ENCODE measurements at regions of chr11 and their contacts with region 1.

Region 1: DNA sequence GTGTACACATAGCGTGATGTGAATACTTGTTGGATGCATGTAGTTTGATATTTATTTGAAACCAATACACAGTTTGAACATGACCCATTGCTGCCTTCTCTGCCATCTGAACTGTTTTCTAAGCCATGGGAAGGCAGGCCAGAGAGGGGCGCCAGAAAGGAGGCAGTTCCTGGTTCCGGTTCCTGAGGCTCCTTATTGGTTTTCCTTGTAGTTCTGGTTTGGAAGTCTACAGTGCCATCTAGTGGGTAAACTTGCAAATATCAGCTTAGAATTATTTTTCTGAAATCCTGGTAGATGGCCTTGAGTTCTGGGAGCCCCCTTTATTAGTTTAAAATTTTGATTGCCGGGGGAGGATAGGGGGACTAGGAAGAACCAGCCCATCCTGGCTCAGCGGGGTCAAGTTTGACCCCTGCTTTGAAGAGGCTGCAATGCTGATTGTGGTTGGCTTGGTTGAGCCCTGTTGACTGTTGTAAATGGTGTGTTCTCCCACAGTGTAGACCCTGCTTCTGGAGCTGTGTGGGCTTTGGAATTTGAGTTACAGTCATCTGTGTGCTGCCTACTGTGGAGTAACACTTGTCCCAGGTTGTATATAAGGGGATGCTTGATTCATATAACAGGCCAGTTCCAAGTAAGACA is 48.4 kb downstream of the GRAMD1B start:
- DNase-seq: no peak
- CTCF ChIP-seq: peak; percentile 43

Region 2: GRCh38 chr11:123231256-123231655 is 247.2 kb before region 1 on chr11:
- in situ Hi-C with region 1: no loop called
- DNase-seq: no peak
- CTCF ChIP-seq: no peak

Region 3: DNA sequence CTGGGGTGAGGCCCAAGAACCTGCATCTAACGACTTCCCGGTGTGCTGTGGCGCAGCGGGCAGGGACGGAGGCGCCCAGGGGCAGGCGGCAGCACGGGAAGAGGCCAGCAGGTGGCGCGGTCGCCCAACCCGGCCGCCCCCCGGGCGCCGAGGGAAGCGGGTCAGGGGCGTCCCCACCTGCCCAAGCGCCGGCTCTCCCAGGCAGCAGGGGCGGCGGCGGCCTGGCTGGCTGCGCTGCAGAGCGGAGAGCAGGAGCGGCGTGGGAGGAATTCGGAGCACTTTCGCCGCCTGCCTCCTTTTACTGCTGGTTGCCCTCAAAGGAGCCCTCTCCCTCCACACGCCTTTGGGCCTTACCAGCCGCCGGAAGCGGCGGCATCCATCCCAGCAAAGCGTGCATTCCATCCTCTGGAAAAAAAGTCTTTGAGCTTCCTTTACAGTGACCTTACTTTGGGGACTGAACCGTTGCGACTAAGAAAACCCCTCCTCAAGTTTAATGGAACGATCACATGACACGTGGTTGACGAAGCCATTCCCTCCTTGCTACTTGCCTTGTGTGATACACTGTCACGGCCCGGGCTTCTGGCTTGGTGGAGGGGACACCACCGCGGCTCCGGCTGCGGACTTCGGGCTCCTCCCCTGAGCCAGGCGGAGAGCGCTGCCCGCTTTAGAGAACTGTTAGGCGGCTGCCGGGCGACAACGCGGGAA is 176.6 kb before region 1 on chr11:
- in situ Hi-C with region 1: loop called (anchors 25 kb)
- DNase-seq: peak; percentile 87
- CTCF ChIP-seq: peak; percentile 97

Region 4: DNA sequence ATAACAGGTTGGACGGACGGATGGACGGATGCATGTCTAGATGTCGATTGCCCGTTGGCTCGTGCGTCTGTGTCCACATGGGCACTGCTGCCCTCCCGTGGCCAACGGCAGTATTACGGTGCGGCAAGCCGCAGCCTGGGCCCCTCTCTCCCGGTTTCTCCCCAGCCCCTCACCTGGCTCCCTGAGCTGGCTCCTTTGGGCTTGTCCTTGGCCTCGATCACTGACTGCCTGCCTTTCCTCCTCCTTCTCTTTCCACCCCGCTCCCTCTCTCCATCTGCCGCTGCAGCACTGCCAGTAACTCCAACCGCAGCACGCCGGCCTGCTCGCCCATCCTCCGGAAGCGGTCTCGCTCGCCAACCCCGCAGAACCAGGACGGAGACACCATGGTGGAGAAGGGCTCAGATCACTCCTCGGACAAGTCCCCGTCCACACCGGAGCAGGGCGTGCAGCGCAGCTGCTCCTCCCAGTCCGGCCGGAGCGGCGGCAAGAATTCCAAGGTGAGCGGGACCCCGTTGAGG is 98.7 kb after region 1 on chr11:
- in situ Hi-C with region 1: no loop called
- DNase-seq: peak; percentile 86
- CTCF ChIP-seq: peak; percentile 94

Region 5: DNA sequence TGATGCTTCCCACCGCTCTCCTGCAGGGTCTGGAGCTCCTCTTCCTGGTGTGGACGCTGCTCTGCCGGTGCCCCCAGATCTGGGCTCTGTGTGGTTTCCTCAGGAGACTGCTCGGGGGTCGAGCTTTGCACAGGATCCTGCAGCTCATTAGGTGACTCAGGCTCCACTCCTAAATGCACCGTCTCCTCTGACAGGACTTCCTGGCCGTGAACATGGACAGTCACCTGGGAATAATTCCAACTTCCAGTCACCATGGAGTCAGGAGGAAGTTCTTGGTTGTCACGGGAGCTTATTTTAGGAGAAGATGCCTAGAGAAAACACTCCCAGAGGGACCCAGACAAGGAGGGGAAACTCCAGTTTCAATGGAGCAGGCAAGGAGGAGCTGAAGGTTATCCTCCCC is 251.1 kb after region 1 on chr11:
- in situ Hi-C with region 1: no loop called
- DNase-seq: no peak
- CTCF ChIP-seq: no peak

Measured in GM13977 (cell line).